AG04450 (cell line): ENCODE measurements at regions of chr4 and their contacts with region 1.

Region 1: GRCh38 chr4:145216535-145216934 is 36.1 kb upstream of the OTUD4 start:
- DNase-seq: no peak
- H3K4me3 ChIP-seq: no peak overlapping the region
- H3K27ac ChIP-seq: no peak overlapping the region
- H3K27me3 ChIP-seq: no peaks in the 10 kb centered on the region
- CTCF ChIP-seq: peak; percentile 78

Region 2: DNA sequence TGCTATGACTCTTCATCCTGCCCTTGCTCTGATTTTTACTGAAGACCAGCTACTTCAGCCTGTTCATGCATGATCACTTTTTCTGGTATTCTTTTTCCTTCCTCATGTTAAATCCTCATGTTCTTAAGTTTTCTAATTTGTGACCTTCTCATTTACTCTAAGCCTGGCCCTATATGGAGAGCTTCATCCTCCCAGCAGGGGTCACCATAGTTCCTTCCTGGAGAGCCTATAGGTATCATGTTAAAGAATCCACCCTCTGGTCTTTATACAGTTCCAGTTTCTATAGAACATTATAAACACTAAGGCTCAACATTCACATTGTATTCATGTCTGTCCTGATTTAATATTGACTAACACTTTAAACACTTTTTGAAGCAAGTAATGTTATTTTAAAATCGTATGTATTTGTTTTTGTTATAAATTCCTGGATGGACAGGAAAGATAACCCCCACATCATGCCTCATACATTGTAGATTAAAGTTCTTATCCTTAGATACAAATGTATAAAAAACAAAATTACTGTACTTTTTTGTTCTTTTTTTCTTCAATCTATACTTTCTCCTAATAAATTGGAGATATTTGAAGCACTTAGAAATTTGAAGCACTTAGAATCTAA is 17.7 kb after region 1 on chr4:
- CTCF ChIA-PET with region 1: interaction called, 10 read pairs
- POLR2A ChIA-PET with region 1: no interaction called
- DNase-seq: peak; percentile 34
- H3K4me3 ChIP-seq: no peak overlapping the region
- H3K27ac ChIP-seq: no peak overlapping the region
- H3K27me3 ChIP-seq: no peaks in the 10 kb centered on the region
- CTCF ChIP-seq: peak; percentile 95

Region 3: GRCh38 chr4:145285928-145286327 is 69.4 kb after region 1 on chr4:
- CTCF ChIA-PET with region 1: no interaction called
- POLR2A ChIA-PET with region 1: no interaction called
- DNase-seq: no peak
- H3K4me3 ChIP-seq: no peak overlapping the region
- H3K27ac ChIP-seq: no peak overlapping the region
- H3K27me3 ChIP-seq: no peaks in the 10 kb centered on the region
- CTCF ChIP-seq: no peak

Region 4: DNA sequence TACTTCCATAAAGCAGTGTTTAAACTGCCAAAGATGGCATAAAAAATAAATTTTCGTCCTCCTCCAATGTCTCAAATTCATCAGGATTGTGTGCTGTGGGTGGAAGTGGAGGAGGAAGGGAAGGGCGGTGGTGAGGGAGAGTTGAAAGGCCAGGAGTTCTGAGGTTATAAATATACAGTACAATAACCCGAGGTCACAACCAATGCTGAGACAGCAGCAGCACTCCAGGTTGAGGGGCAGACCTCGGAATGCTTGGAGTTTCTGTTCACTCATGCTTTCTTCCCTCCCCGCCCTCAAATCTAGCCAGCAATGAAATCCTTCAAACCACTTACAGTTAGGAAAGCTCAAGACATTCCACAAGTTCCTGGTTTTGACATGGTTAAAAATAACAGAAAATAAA is 131.1 kb after region 1 on chr4:
- CTCF ChIA-PET with region 1: no interaction called
- POLR2A ChIA-PET with region 1: no interaction called
- DNase-seq: no peak
- H3K4me3 ChIP-seq: no peak overlapping the region
- H3K27ac ChIP-seq: no peak overlapping the region
- H3K27me3 ChIP-seq: peaks cover under 1% of the 10 kb centered on the region
- CTCF ChIP-seq: no peak

Region 5: DNA sequence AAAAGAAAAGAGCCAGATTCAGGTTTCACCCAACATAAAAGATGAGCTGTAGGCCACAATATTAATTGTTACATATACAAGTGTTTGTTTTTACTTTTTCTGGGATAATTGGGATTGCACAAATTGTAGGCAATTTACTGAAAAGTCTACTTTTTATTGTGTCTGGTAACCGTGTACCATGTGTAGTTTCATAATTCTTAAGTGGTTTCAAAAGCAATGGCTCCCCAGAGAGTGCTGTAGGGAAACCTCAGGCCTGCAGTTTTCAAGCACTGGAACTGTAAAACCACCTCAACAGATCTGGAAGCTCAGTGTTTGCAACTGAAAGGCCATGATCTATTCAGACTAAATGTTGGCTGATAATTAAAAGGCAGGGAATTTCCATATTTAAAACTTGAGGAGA is 348.8 kb after region 1 on chr4:
- CTCF ChIA-PET with region 1: interaction called, 10 read pairs
- POLR2A ChIA-PET with region 1: no interaction called
- DNase-seq: no peak
- H3K4me3 ChIP-seq: no peak overlapping the region
- H3K27ac ChIP-seq: no peak overlapping the region
- H3K27me3 ChIP-seq: no peaks in the 10 kb centered on the region
- CTCF ChIP-seq: no peak

Region 6: GRCh38 chr4:145602129-145602760 is 385.7 kb after region 1 on chr4:
- CTCF ChIA-PET with region 1: interaction called, 11 read pairs
- POLR2A ChIA-PET with region 1: no interaction called
- DNase-seq: no peak
- H3K4me3 ChIP-seq: no peak overlapping the region
- H3K27ac ChIP-seq: no peak overlapping the region
- H3K27me3 ChIP-seq: no peaks in the 10 kb centered on the region
- CTCF ChIP-seq: no peak

Region 7: DNA sequence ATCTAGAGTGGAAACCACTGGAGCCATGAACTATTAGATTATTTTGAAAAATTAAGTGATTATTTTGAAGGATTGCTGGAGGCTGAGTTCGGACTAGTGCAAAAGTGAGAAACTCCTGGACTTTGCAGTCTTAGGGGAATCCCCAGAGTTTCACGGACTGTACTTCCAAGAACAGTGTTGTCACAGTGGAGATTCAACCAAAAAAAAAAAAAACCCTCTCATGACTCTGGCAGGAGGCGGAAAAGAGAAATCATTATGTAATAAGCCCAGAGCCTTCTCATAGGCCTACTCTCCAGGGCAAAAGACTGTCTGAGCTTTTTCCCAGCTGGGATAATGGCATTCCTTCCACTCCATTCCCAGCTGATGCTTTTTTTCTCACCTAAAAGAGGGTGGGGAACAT is 446.7 kb after region 1 on chr4:
- CTCF ChIA-PET with region 1: no interaction called
- POLR2A ChIA-PET with region 1: no interaction called
- DNase-seq: no peak
- H3K4me3 ChIP-seq: no peak overlapping the region
- H3K27ac ChIP-seq: no peak overlapping the region
- H3K27me3 ChIP-seq: no peaks in the 10 kb centered on the region
- CTCF ChIP-seq: no peak